Lower leg skin (tissue), 4 donors: ENCODE measurements at regions of chr22 and their contacts with region 1.

Region 1: DNA sequence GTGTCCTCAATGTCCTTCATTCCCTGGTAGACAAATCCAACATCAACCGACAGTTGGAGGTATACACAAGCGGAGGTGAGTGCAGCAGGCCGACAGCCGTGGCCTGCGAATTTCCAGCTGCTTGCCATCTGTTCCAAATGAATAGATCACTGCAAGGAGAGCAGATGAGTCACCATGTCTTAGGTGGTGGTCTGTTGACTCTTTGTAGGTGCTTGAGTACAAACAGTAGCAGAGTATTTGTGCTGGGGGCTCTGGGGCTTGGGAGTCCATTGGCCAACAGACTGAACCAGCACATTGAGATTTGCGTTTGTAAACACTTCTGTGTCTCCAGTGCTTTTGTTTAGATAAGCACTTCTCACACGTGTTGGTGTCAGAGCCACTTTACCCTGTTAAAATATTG is 21.1 kb downstream of the EIF3L start:
- DNase-seq: no peak
- H3K4me3 ChIP-seq: no peak overlapping the region
- CTCF ChIP-seq: no peak
- POLR2A ChIP-seq: no peak

Region 2: DNA sequence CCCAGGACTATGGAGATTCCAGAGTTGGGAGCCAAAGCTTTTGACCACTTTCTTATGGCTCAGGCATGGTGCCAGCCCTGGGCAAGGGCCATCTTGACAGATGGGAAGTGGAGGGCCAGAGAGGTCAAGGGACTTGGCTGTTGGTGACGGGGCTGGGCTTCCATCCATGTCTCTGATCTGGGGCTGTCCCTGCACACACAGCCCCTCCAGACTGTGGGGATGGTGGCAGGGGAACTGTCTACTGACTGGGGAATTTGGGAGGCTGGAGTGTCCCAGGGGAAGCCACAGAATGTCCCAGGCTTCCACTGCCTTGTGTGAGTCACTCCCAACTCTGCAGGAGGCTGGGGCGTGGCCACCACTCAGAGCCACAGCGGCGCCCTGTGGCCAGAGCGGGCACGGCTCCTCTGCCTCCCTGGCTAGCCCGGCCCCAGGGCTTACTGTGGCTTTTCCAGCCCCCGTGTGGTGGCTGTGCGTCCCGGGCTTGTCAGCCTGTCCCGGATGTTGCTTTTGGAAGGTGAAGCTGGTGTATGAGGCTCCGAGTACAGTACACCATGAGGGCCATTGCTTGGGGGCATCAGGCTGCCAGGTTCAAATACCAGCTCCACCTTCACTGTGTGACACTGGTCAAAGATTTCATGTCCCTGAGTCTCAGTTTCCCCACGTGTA is 63.6 kb after region 1 on chr22:
- intact Hi-C with region 1: loop called (anchors 10 kb)
- DNase-seq: peak; percentile 83 to 97
- H3K4me3 ChIP-seq: no peak overlapping the region
- CTCF ChIP-seq: peak in 1 of 3 donors; percentile 92
- POLR2A ChIP-seq: no peak